ENCODE measurements at regions of chr19 and their contacts with region 1.

Region 1: GRCh38 chr19:51986309-51987291 is at the start of gene ZNF350:
- DNase-seq: peak; percentile 90 to 93
- ATAC-seq: peak; percentile 99 to 100 (median 100)
- H3K4me3 ChIP-seq: peak within 1 kb of the TSS; percentile 92
- H3K27ac ChIP-seq: peak within 1 kb of the TSS; percentile 79
- H3K4me1 ChIP-seq: peaks cover 6% of the 10 kb centered on the region
- H3K27me3 ChIP-seq: no peaks in the 10 kb centered on the region
- CTCF ChIP-seq: no peak
- total RNA-seq, gene ZNF350: 2.9 to 7.2 (median 4.9) TPM

Region 2: DNA sequence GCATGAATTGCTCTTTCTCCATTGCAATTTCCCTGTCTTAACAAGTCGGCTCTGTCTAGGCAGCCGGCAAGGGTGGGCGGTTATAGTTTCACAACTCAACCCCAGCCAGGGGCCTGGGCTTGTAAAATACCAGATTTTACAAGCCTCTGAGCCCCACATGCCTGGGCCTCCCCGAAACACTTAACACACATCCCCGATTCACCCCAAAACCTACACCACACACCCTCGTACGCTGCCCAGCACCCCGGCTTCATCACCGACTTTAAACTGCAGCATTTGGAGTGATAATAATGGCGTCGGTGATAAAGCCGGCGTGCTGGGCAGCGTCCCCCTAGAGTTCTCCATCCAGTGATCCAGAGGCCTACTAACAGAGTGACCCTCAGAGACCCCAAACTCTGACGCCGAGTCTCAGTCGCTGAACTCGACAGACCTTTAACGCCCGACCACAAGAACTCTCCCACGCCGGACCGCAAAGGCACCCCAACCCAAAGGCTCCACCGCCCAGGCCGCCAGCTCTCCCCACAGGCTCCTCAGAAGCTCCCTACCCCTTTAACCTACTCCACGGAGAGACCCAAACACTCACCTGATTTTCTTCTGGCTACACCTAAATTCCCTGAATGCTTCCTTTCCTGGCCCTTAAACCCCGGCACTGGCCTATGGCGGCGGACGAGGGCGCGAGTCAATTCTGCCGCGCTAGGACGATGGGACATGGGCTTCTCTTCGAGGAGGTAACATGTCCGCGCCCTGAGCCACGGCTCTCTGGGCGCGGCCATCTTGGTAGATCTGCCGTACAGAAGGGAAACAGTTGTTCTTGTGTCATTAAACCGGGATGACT is 82.1 kb before region 1 on chr19 and contains the start of gene ZNF649:
- intact Hi-C with region 1: loop called in 1 of 2 experiments (anchors 10 kb)
- DNase-seq: peak; percentile 87 to 91
- ATAC-seq: peak; percentile 98 to 100 (median 100)
- H3K4me3 ChIP-seq: peak within 1 kb of the TSS; percentile 73
- H3K27ac ChIP-seq: peak within 1 kb of the TSS; percentile 71
- H3K4me1 ChIP-seq: peaks cover 5% of the 10 kb centered on the region
- H3K27me3 ChIP-seq: peaks cover 0 to 6% (median 0%) of the 10 kb centered on the region in 3 donors
- CTCF ChIP-seq: no peak
- total RNA-seq, gene ZNF649: 4.2 to 6.0 (median 4.9) TPM

Region 3: DNA sequence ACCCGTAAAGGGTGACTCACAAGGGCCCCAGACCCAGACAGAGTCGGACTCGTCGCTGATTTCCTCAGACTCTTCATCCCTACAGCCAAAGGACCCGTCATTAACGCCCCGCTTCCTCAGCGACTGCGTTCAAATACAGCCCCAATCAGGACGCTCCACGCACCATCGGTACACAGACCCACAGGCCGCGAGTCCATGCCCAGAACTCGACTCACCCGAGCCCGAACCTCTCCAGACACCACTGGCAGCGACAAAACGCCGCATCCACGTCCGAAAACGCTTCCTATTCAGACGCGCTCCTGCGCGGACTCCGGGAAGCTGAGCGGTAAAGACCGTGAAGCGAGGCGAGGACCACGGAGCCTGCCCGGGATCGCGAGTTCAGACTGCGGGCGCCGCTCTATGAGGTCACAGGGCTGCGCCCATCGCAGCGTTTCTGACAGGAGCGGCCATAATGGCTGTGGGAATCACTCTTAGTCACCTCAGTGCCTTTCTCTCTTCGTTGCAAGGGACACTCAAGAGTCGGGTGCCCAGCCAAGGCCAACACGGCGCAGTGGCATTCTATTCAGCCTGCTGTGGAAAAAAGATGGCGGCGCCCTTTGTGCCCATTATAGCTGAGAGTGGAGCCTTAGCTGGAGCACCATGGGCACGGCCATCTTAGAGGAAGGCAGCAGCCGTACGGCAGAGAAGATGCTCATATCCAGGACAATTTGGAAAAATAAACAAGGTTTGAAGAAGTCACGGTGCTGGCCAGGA is 41.6 kb after region 1 on chr19 and contains the start of gene ZNF614:
- intact Hi-C with region 1: loop called in 1 of 2 experiments (anchors 5 kb)
- DNase-seq: peak; percentile 88 to 94
- ATAC-seq: peak; percentile 98
- H3K4me3 ChIP-seq: peak within 1 kb of the TSS; percentile 92
- H3K27ac ChIP-seq: peak within 1 kb of the TSS; percentile 96
- H3K4me1 ChIP-seq: peaks cover 5% of the 10 kb centered on the region
- H3K27me3 ChIP-seq: no peaks in the 10 kb centered on the region
- CTCF ChIP-seq: no peak
- total RNA-seq, gene ZNF614: 3.8 to 6.2 (median 4.5) TPM

Region 4: DNA sequence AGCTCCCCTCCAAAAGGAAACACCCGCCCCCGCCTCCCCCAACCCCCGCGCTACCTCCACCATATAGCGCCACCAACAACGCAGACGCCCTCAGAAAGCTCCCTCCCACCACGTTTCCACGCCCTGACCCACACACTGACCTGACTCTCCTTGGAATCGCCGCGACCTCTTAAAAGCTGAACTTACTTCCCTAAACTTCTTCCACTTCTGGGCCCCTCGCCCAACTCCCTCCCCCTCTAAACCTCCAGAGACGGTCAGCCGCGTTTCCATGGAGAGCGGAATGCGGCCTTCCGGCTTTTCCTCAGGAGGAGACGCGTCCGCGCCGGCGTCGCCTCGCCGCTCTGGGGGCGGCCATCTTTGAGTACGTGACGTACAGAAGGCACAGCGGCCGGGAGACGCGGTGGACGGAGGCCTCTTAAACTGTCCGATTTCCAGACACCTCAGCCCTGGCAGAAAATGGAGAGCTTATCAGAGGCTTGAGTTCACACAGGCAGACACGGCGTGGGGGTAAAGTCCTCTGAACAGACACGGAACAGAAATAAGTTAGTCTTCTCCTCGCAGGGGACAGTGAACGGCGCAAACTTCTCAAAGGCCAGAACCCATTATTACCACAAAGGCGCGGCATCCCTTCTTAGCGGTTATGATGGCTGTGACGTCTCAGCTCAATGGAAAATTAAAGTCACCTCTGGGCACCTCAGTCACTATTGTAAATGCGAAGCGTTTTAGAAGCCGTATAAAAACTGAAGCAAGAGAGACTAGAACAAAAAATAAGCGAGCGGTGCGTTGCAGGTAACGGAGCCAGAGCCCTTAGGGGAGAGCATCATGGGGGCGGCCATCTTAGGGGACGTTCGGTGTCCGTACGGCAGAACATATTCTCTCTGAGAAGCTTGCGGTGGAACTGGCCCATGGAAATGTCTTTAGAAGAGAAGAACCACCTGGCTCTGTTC is 62.2 kb after region 1 on chr19 and contains the start of gene ZNF432:
- intact Hi-C with region 1: loop called in 1 of 2 experiments (anchors 5 kb)
- DNase-seq: peak; percentile 96 to 97
- ATAC-seq: peak; percentile 99
- H3K4me3 ChIP-seq: peak within 1 kb of the TSS; percentile 74
- H3K27ac ChIP-seq: peak within 1 kb of the TSS; percentile 92
- H3K4me1 ChIP-seq: no peaks in the 10 kb centered on the region
- H3K27me3 ChIP-seq: no peaks in the 10 kb centered on the region
- CTCF ChIP-seq: no peak
- total RNA-seq, gene ZNF432: 3.1 to 6.4 (median 4.5) TPM

Measured in psoas muscle (tissue), 8 donors.